Heart left ventricle (tissue), 16 donors: ENCODE measurements at regions of chr10 and their contacts with region 1.

Region 1: DNA sequence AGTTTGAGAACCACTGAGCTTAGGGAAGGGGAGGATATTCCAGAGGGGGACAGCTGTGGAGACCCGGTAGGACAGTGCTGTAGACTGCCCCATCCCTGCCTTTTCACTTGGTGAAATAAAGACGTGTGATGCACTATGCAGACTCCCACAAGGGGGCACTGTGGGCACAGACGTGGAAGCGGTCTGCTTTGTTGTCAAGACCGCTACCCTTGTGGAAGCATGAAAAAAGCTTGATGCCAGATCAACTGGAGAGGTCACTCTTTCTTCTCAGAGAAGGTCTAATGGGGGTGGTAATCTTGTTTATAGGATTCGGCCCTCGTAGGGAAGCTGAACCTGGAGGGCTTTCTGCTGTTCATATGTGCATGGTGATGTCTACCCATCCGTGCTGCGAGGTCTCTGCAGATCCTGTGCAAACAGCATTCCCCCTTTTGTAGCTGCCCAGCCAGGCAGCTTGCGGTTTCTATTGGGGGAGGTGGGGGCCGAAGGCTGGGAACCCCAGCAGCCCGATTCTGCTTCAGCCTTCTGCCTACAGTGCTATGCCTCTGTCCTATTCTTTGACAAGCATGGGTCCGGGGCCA is 13.7 kb downstream of the RPS24 start:
- DNase-seq: peak; percentile 84 to 93 (median 86)
- ATAC-seq: peak; percentile 55 to 81 (median 78)
- H3K4me3 ChIP-seq: no peak overlapping the region
- H3K27ac ChIP-seq: no peak overlapping the region
- H3K4me1 ChIP-seq: peaks cover 0 to 23% (median 8%) of the 10 kb centered on the region in 12 donors
- H3K27me3 ChIP-seq: no peaks in the 10 kb centered on the region
- CTCF ChIP-seq: peak; percentile 85 to 95 (median 88)
- POLR2A ChIP-seq: no peak

Region 2: DNA sequence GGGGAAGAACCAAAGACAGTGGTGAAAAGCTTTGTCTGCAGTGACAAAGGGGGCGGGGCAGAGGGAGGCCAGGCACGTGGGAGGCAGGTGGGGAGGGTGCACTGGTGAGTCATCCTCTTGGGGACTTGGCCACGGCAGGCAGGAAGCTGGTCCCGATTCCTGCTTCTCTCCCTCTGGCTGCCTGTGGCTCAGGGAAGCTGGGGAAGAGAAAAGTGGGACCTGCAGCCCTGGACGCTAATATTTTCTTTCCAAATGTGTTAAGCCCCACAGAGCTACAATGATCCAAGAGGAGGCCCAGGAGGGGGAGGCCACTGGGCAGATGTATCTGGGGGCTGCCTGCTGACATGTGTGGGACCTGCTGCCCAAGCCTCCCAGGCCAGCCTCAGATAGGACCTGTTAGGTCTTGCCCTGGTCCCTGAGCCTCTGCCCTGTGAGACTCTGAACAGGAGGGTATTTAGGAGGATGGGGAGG is 641.6 kb before region 1 on chr10:
- intact Hi-C with region 1: no loop called
- DNase-seq: peak in 4 of 5 donors; percentile 33 to 61 (median 56)
- ATAC-seq: peak in 3 of 4 donors; percentile 79 to 94 (median 84)
- H3K4me3 ChIP-seq: no peak overlapping the region
- H3K27ac ChIP-seq: peak overlapping the region in 1 of 12 donors; percentile 71
- H3K4me1 ChIP-seq: peaks cover 0 to 7% (median 0%) of the 10 kb centered on the region in 12 donors
- H3K27me3 ChIP-seq: peaks cover 0 to 29% (median 0%) of the 10 kb centered on the region in 9 donors
- CTCF ChIP-seq: no peak
- POLR2A ChIP-seq: no peak

Region 3: DNA sequence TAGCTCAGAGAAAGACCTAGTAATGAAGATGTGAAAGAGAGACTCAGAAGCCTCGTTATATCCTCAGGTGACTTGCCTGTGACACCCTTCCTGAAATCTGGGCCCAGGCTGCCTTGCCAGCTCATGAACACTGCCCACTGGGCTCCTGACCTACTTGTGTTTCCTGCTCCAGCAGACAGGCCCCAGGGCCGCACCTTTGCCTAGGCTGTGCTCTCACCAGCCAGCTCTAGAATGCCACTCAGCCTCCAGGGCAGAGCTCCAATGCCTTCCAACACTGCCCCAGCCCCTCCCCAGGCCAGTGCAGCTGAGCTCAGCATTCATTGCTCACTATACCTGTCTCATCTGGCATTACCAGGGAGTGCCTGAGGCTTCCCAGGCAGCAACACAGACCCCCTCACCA is 215.2 kb before region 1 on chr10:
- intact Hi-C with region 1: no loop called
- DNase-seq: no peak
- ATAC-seq: peak in 2 of 4 donors; percentile 43 to 45
- H3K4me3 ChIP-seq: no peak overlapping the region
- H3K27ac ChIP-seq: no peak overlapping the region
- H3K4me1 ChIP-seq: peaks cover 0 to 21% (median 9%) of the 10 kb centered on the region in 12 donors
- H3K27me3 ChIP-seq: no peaks in the 10 kb centered on the region
- CTCF ChIP-seq: no peak
- POLR2A ChIP-seq: no peak

Region 4: DNA sequence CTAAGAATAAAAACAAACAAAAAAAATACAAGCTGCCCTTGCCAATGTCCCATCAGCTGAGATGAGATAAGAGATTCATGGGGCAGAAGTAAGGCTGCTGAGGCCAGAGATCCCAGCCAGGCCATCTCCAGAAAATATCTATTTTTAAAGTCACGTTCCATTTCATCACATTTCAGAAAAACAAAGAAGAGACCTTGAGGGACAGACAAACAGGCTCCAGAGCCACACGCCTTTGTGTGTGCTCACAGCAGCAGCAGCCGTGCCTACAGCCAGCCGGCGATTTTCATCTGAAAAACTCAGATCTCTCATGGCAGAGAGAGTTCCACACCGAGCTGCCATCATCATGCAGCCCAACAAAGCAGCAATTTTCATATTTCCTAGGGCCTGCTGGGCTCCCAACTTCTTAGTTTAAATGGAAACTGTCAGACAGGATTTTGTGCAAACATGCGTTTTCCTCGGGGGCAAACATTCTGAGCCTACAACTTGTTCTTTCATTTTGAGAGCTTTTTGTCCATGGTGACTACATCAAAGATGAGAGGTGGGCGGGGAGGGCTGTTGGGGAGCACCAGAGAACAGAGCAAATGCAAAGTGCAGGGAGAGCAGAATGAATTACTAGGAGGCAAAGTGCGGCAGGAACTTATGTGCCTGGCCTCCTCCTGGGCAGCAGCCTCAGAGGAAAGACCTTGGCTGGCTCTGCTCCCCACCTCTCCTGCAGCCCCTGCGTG is 159.6 kb before region 1 on chr10:
- intact Hi-C with region 1: no loop called
- DNase-seq: no peak
- ATAC-seq: peak in 2 of 4 donors; percentile 11
- H3K4me3 ChIP-seq: peak overlapping the region in 6 of 12 donors; percentile 13 to 33 (median 18)
- H3K27ac ChIP-seq: peak overlapping the region in 6 of 12 donors; percentile 18 to 74 (median 30)
- H3K4me1 ChIP-seq: peaks cover 0 to 41% (median 25%) of the 10 kb centered on the region in 12 donors
- H3K27me3 ChIP-seq: no peaks in the 10 kb centered on the region
- CTCF ChIP-seq: no peak
- POLR2A ChIP-seq: no peak

Region 5: DNA sequence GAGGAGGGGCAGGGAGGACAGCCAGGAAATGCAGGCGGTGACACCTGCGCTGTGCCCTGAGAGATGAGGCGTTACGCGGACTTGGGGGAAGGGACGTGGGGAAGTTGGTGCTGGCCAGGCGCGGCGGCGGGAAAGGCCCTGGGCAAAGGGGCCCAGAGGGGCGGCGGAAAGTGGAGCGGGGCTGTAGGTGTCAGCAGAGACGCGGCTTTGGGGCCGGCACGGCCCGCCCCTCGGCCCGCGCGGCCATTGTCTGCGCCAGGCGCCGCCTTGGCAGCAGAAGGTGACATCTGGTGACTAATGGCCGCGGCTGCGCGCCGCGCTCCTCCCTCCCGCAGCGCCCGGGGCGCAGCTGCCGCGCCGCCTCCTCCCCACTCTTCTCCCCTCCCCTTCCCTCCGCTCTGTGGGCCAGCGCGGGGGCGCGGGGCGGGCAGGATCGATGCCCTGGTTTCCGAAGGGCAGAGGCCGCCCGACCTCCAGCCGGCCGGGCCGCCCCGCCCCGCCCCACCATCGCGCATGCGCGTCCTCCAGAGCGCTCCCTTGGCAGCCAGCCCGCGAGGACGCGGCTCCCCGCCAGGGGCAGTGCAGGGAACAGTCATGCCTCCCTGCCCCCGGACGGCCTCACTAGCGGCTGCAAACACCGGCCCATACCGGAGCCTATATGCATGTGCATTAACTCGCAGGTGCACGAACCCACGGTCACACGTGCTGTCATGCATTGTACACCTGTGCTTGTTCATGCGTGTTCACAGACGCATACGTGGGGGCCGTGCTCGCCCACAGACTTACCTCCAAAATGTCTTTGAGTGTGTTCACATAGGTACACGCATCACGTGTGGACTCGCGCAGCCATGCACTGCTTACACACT is 255.8 kb after region 1 on chr10:
- intact Hi-C with region 1: loop called in 5 of 10 experiments (anchors 5 to 10 kb)
- DNase-seq: peak; percentile 94 to 97 (median 95)
- ATAC-seq: peak; percentile 96 to 99 (median 98)
- H3K4me3 ChIP-seq: peak overlapping the region; percentile 12 to 68 (median 60)
- H3K27ac ChIP-seq: peak overlapping the region; percentile 83 to 92 (median 87)
- H3K4me1 ChIP-seq: peaks cover 0 to 20% (median 11%) of the 10 kb centered on the region in 12 donors
- H3K27me3 ChIP-seq: no peaks in the 10 kb centered on the region
- CTCF ChIP-seq: peak; percentile 59 to 81 (median 69)
- POLR2A ChIP-seq: peak; percentile 3 to 78

Region 6: DNA sequence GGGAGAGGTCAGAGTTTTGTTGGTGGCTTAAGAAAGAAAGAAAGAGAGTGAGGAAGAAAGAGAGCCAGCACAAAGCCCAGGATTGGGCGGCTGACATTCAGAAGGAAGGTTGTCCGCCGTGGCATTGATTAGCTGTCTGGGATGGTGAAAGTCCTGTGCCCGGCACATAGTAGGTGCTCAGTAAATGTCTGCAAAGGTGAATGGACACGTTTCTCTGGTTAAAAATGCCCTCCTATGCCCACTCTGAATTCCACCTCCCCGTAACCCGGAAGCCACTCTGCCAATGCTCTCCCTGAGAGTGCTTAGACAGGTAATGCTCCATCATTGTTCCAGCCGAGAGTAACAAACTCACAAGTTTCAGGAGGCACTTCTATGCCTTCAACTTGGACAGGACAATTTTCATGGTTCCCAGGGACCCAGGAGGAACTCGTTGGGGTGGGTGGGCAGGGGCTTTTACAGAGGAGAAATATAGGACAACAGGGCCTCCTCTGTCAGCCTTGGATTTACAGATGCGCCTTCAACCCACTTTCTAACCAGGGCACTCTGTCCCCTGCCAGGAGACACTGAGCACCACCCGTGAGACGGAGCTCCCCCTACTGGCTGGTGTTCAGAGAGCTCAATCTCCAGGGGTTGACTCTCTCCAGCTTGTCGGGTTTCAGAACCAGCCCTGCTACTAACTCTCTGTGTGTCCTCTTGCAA is 609.9 kb after region 1 on chr10:
- intact Hi-C with region 1: loop called in 8 of 10 experiments (anchors 2 to 10 kb)
- DNase-seq: peak; percentile 72 to 84 (median 76)
- ATAC-seq: peak; percentile 81 to 94 (median 92)
- H3K4me3 ChIP-seq: no peak overlapping the region
- H3K27ac ChIP-seq: peak overlapping the region in 1 of 12 donors; percentile 45
- H3K4me1 ChIP-seq: peaks cover 0 to 5% (median 0%) of the 10 kb centered on the region in 12 donors
- H3K27me3 ChIP-seq: no peaks in the 10 kb centered on the region
- CTCF ChIP-seq: peak; percentile 55 to 77 (median 66)
- POLR2A ChIP-seq: no peak

Region 7: GRCh38 chr10:79052291-79053080 is 1005.1 kb after region 1 on chr10:
- intact Hi-C with region 1: loop called in 1 of 10 experiments (anchors 10 kb)
- DNase-seq: peak in 2 of 5 donors; percentile 4 to 18
- ATAC-seq: no peak
- H3K4me3 ChIP-seq: no peak overlapping the region
- H3K27ac ChIP-seq: no peak overlapping the region
- H3K4me1 ChIP-seq: peaks cover 0 to 33% (median 9%) of the 10 kb centered on the region in 12 donors
- H3K27me3 ChIP-seq: no peaks in the 10 kb centered on the region
- CTCF ChIP-seq: no peak
- POLR2A ChIP-seq: no peak